ENCODE measurements at regions of chr2 and their contacts with region 1.

Region 1: GRCh38 chr2:218395797-218396687 is 3.6 kb upstream of the CTDSP1 start:
- DNase-seq: peak; percentile 94
- ATAC-seq: peak; percentile 25
- H3K4me3 ChIP-seq: peak overlapping the region; percentile 71 to 97 (median 85)
- H3K27ac ChIP-seq: peak overlapping the region; percentile 99
- H3K4me1 ChIP-seq: peaks cover 41% of the 10 kb centered on the region
- H3K27me3 ChIP-seq: no peaks in the 10 kb centered on the region; a peak in 1 of 5 replicates
- CTCF ChIP-seq: peak; percentile 94
- EP300 ChIP-seq: peak; percentile 19 to 78; a peak in 3 of 4 replicates
- POLR2A ChIP-seq: peak in 1 of 2 experiments; percentile 23; a peak in 1 of 4 replicates
- RAD21 ChIP-seq: peak; percentile 94

Region 2: DNA sequence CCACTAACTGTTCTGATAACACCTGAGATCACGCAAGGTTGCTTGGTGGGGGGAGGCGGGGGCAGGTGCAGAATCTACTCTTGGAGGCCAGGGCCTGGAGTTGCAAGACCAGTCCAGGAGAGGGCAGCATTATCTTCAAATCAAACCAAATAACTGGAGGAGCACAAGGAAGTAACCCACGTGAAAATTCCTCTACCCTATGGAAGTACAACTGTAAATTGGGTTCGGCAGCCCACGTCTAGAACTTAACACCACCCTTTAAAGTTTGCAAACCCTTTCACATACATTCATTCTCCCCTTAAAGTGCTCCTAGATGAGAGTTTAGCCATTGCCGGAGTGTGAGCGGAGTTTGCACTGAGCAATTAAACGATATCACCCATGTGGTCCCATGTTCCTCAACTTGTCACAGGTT is 209.7 kb before region 1 on chr2:
- CTCF ChIA-PET with region 1: no interaction called
- POLR2A ChIA-PET with region 1: no interaction called
- in situ Hi-C with region 1: no loop called
- intact Hi-C with region 1: loop called (anchors 10 kb)
- DNase-seq: peak; percentile 76
- ATAC-seq: peak; percentile 94
- H3K4me3 ChIP-seq: peak overlapping the region in 1 of 3 experiments; percentile 14; a peak in 1 of 6 replicates
- H3K27ac ChIP-seq: no peak overlapping the region
- H3K4me1 ChIP-seq: peaks cover 15% of the 10 kb centered on the region
- H3K27me3 ChIP-seq: peaks cover 0 to 11% of the 10 kb centered on the region in 2 experiments; a peak in 1 of 5 replicates
- CTCF ChIP-seq: peak; percentile 87
- EP300 ChIP-seq: no peak
- POLR2A ChIP-seq: no peak
- RAD21 ChIP-seq: peak; percentile 64

Region 3: DNA sequence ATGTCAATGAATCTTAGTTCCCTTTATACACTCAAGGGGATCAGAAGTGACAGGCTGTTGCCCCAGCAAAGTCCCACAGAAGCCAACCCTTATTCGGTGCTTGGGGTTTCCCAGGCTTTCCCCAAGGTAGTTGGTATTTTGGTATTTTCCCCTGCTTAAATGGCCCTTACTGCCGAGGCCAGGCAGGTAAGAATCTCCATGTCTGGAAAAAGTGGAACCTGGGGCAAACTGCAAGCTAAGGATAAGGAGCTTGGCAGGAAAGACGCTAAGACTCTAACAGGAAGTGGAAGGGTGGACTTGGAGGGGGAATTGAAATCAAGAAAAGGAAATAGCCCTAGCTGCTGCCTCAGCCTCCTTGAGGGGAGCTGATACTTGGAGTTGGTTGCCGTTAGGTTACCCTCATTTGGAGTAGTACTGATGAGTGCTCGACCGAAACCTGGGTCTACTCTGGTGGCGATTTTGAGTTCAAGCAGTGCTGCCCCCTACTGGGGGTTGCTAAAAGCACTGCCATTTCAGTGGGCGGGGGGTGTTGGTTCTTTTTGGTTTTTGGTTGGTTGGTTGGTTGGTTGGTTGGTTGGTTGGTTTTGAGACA is 138.6 kb before region 1 on chr2:
- CTCF ChIA-PET with region 1: no interaction called
- POLR2A ChIA-PET with region 1: no interaction called
- in situ Hi-C with region 1: no loop called
- intact Hi-C with region 1: no loop called
- DNase-seq: no peak
- ATAC-seq: peak; percentile 14; the same call in 2 of the 3 replicates
- H3K4me3 ChIP-seq: no peak overlapping the region
- H3K27ac ChIP-seq: no peak overlapping the region
- H3K4me1 ChIP-seq: peaks cover 29% of the 10 kb centered on the region
- H3K27me3 ChIP-seq: no peaks in the 10 kb centered on the region
- CTCF ChIP-seq: peak; percentile 57
- EP300 ChIP-seq: no peak
- POLR2A ChIP-seq: no peak
- RAD21 ChIP-seq: 0 out of 2 replicates have a peak, but pooled peaks have one; percentile 13

Region 4: GRCh38 chr2:218301176-218301819 is 94.7 kb before region 1 on chr2:
- CTCF ChIA-PET with region 1: interaction called, 36 read pairs
- POLR2A ChIA-PET with region 1: interaction called, 24 read pairs
- in situ Hi-C with region 1: no loop called
- intact Hi-C with region 1: loop called (anchors 1 kb)
- DNase-seq: peak; percentile 90
- ATAC-seq: peak; percentile 64
- H3K4me3 ChIP-seq: no peak overlapping the region
- H3K27ac ChIP-seq: peak overlapping the region; percentile 25
- H3K4me1 ChIP-seq: peaks cover 63% of the 10 kb centered on the region
- H3K27me3 ChIP-seq: no peaks in the 10 kb centered on the region
- CTCF ChIP-seq: peak; percentile 99
- EP300 ChIP-seq: no peak
- POLR2A ChIP-seq: no peak
- RAD21 ChIP-seq: peak; percentile 99

Region 5: DNA sequence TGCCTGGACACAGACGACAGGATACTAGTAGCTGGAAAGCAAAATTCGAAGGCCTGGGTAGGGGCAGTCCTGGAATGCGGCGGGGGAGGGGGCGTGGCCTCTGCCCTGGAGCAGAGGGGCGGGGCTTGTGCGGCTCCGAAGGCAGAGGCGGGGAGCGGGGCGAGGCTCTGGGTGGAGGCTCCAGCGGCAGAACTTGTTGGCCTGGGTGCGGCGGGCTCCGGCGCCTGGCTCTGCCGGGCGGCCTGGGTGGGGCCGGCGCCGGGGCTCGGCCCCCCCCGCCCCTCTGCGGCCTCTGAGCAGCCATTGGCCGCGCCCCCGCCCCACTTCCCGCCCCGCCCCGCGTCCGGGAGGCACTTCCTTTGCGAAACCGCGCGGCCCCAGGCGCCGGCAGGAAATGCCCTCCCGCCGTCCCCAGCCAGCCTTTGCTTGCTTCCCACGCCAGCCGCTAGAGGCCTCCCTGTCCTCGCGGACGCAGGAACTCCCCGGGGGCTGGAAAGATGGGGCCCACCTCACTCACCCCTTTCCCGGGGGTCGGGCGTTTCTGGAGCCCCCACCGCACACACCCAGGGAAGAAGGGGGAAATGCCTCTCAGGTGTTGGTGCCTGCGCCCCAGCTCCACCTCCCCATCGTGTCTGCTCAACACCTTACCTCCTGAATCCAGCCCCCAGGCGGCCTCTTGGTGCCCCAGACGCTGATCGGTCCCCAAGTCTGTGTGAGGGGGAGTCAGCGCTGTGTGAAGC is 10.3 kb after region 1 on chr2:
- CTCF ChIA-PET with region 1: no interaction called
- POLR2A ChIA-PET with region 1: interaction called, 15 read pairs
- in situ Hi-C with region 1: no loop called
- intact Hi-C with region 1: no loop called
- DNase-seq: peak; percentile 92
- ATAC-seq: peak; percentile 78
- H3K4me3 ChIP-seq: peak overlapping the region; percentile 67 to 86 (median 67)
- H3K27ac ChIP-seq: peak overlapping the region; percentile 79
- H3K4me1 ChIP-seq: peaks cover 61% of the 10 kb centered on the region
- H3K27me3 ChIP-seq: no peaks in the 10 kb centered on the region
- CTCF ChIP-seq: peak; percentile 98
- EP300 ChIP-seq: peak; percentile 37 to 53; a peak in 2 of 4 replicates
- POLR2A ChIP-seq: peak in 1 of 2 experiments; percentile 23; a peak in 1 of 4 replicates
- RAD21 ChIP-seq: peak; percentile 98

Region 6: GRCh38 chr2:218568190-218569037 is 172.4 kb after region 1 on chr2 and contains the starts of genes CNOT9 and USP37:
- CTCF ChIA-PET with region 1: no interaction called
- POLR2A ChIA-PET with region 1: no interaction called
- in situ Hi-C with region 1: no loop called
- intact Hi-C with region 1: loop called (anchors 5 kb)
- DNase-seq: peak; percentile 98
- ATAC-seq: peak; percentile 90
- H3K4me3 ChIP-seq: peak within 1 kb of the TSS; percentile 89 to 97 (median 91)
- H3K27ac ChIP-seq: peak within 1 kb of the TSS; percentile 97
- H3K4me1 ChIP-seq: peaks cover 63% of the 10 kb centered on the region
- H3K27me3 ChIP-seq: peaks cover 0 to 6% of the 10 kb centered on the region in 2 experiments; a peak in 1 of 5 replicates
- CTCF ChIP-seq: no peak; the same call in 1 of the 2 replicates
- EP300 ChIP-seq: peak; percentile 67 to 70; a peak in 3 of 4 replicates
- POLR2A ChIP-seq: peak; percentile 92 to 98
- RAD21 ChIP-seq: 0 out of 2 replicates have a peak, but pooled peaks have one; percentile 24
- total RNA-seq, gene CNOT9: 92.4 and 101 TPM in 2 replicates
- total RNA-seq, gene USP37: 30.6 and 36.2 TPM in 2 replicates